Transverse colon (tissue), 4 donors: ENCODE measurements at regions of chr17 and their contacts with region 1.

Region 1: GRCh38 chr17:51362818-51363585 is 102.7 kb downstream of the UTP18 start:
- DNase-seq: no peak
- H3K4me3 ChIP-seq: no peak overlapping the region
- H3K27ac ChIP-seq: no peak overlapping the region
- H3K4me1 ChIP-seq: no peaks in the 10 kb centered on the region
- H3K27me3 ChIP-seq: no peaks in the 10 kb centered on the region
- CTCF ChIP-seq: no peak
- EP300 ChIP-seq: no peak
- POLR2A ChIP-seq: no peak

Region 2: GRCh38 chr17:50956750-50957523 is 406.1 kb before region 1 on chr17:
- in situ Hi-C with region 1: no loop called
- intact Hi-C with region 1: no loop called
- DNase-seq: peak; percentile 68
- H3K4me3 ChIP-seq: no peak overlapping the region
- H3K27ac ChIP-seq: peak overlapping the region in 3 of 4 donors; percentile 45 to 70 (median 57)
- H3K4me1 ChIP-seq: peaks cover 7 to 28% (median 25%) of the 10 kb centered on the region in 4 donors
- H3K27me3 ChIP-seq: no peaks in the 10 kb centered on the region
- CTCF ChIP-seq: peak; percentile 60 to 83 (median 73)
- EP300 ChIP-seq: no peak
- POLR2A ChIP-seq: no peak

Region 3: GRCh38 chr17:52465407-52465806 is 1102.4 kb after region 1 on chr17:
- in situ Hi-C with region 1: no loop called
- intact Hi-C with region 1: loop called (anchors 10 kb)
- DNase-seq: no peak
- H3K4me3 ChIP-seq: no peak overlapping the region
- H3K27ac ChIP-seq: no peak overlapping the region
- H3K4me1 ChIP-seq: no peaks in the 10 kb centered on the region
- H3K27me3 ChIP-seq: no peaks in the 10 kb centered on the region
- CTCF ChIP-seq: no peak
- EP300 ChIP-seq: no peak
- POLR2A ChIP-seq: no peak